Heart right ventricle (tissue), 16 donors: ENCODE measurements at regions of chr7 and their contacts with region 1.

Region 1: GRCh38 chr7:75994388-75995051 is at the start of gene TMEM120A:
- DNase-seq: peak; percentile 97 to 99
- ATAC-seq: peak; percentile 89 to 95 (median 94)
- H3K4me3 ChIP-seq: peak within 1 kb of the TSS; percentile 64 to 98 (median 81)
- H3K27ac ChIP-seq: peak within 1 kb of the TSS; percentile 90 to 99 (median 97)
- H3K4me1 ChIP-seq: peaks cover 20 to 55% (median 44%) of the 10 kb centered on the region in 9 donors
- H3K27me3 ChIP-seq: no peaks in the 10 kb centered on the region
- CTCF ChIP-seq: peak in 8 of 9 donors; percentile 13 to 51 (median 31)
- total RNA-seq, gene TMEM120A: 132 to 192 (median 149) TPM

Region 2: GRCh38 chr7:75914730-75915585 is 79.6 kb before region 1 on chr7 and contains the start of gene POR:
- intact Hi-C with region 1: loop called in 4 of 10 experiments (anchors 1 to 5 kb)
- DNase-seq: peak; percentile 95 to 97
- ATAC-seq: peak; percentile 98 to 100 (median 99)
- H3K4me3 ChIP-seq: peak within 1 kb of the TSS; percentile 88 to 100 (median 96)
- H3K27ac ChIP-seq: peak within 1 kb of the TSS; percentile 80 to 98 (median 94)
- H3K4me1 ChIP-seq: peaks cover 9 to 47% (median 37%) of the 10 kb centered on the region in 9 donors
- H3K27me3 ChIP-seq: no peaks in the 10 kb centered on the region
- CTCF ChIP-seq: peak in 5 of 9 donors; percentile 16 to 39 (median 32)
- total RNA-seq, gene POR: 37.3 to 203 (median 59.3) TPM

Region 3: GRCh38 chr7:75945297-75946168 is 49.0 kb before region 1 on chr7:
- intact Hi-C with region 1: loop called in 3 of 10 experiments (anchors 5 kb)
- DNase-seq: no peak
- ATAC-seq: peak; percentile 74 to 89 (median 82)
- H3K4me3 ChIP-seq: no peak overlapping the region
- H3K27ac ChIP-seq: peak overlapping the region in 9 of 10 donors; percentile 12 to 73 (median 49)
- H3K4me1 ChIP-seq: peaks cover 0 to 54% (median 17%) of the 10 kb centered on the region in 9 donors
- H3K27me3 ChIP-seq: no peaks in the 10 kb centered on the region
- CTCF ChIP-seq: peak in 6 of 9 donors; percentile 17 to 48 (median 35)

Region 4: GRCh38 chr7:75951511-75951917 is 43.0 kb before region 1 on chr7:
- intact Hi-C with region 1: loop called in 3 of 10 experiments (anchors 5 kb)
- DNase-seq: no peak
- ATAC-seq: peak; percentile 45 to 85 (median 74)
- H3K4me3 ChIP-seq: no peak overlapping the region
- H3K27ac ChIP-seq: peak overlapping the region in 9 of 10 donors; percentile 8 to 85 (median 76)
- H3K4me1 ChIP-seq: peaks cover 0 to 56% (median 19%) of the 10 kb centered on the region in 9 donors
- H3K27me3 ChIP-seq: no peaks in the 10 kb centered on the region
- CTCF ChIP-seq: no peak

Region 5: DNA sequence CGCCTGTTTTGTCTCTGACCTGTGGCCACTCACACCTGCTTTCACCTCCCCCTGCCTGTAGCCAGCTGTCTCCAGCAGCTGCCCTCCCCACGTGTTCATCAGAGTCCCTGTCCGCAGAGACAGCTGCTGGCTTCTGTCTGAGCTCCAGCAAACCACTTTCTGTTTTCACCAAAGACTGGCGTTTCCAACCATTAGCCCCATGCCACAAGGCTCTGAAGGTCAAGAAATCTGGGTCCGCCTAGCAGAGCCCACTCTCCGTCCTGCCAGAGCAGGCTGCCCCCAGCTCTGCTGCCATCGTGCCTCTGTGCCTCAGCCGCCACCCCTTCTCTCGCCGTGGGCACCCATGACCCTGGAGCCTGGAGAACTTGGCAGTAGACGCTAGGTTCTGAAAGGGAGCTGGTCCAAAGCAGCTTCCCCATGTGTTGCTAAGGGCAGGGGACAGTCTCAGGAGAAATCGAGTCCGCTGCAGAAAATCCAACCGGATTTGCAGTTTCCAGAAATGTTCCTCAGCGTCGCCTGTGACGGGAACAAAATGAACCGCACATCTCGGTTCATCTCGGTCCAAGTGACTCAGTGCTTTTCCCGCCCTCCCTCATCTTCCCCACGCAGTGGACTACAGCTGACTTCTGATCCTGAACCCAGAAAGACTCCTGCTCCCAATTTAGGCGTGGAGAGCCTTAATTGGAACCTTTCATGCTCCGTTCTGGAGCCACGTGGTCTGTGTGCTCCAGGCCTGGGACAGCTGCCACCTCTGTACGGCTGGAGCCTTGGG is 28.1 kb before region 1 on chr7:
- intact Hi-C with region 1: loop called in 1 of 10 experiments (anchors 1 kb)
- DNase-seq: peak; percentile 52 to 80
- ATAC-seq: peak; percentile 46 to 78 (median 67)
- H3K4me3 ChIP-seq: peak overlapping the region in 4 of 10 donors; percentile 4 to 31 (median 14)
- H3K27ac ChIP-seq: peak overlapping the region; percentile 70 to 95 (median 82)
- H3K4me1 ChIP-seq: peaks cover 36 to 97% (median 78%) of the 10 kb centered on the region in 9 donors
- H3K27me3 ChIP-seq: no peaks in the 10 kb centered on the region
- CTCF ChIP-seq: no peak